Dendritic cell treated with granulocyte-macrophage colony-stimulating factor and Interleukin-4, amounts not matched to agents 40 ng/mL and 50 ng/mL, for 4 days (primary cell): ENCODE measurements at regions of chr3 and their contacts with region 1.

Region 1: GRCh38 chr3:40476478-40477470 is at the start of gene ZNF619:
- H3K4me3 Mint-ChIP-seq: peak within 1 kb of the TSS; percentile 95
- H3K27ac Mint-ChIP-seq: peak within 1 kb of the TSS; percentile 99
- H3K4me1 Mint-ChIP-seq: peaks cover 17% of the 10 kb centered on the region
- H3K27me3 Mint-ChIP-seq: no peaks in the 10 kb centered on the region

Region 2: GRCh38 chr3:40505599-40506462 is 29.1 kb after region 1 on chr3 and contains the start of gene ZNF620:
- intact Hi-C with region 1: loop called (anchors 1 kb)
- H3K4me3 Mint-ChIP-seq: peak within 1 kb of the TSS; percentile 84
- H3K27ac Mint-ChIP-seq: peak within 1 kb of the TSS; percentile 75
- H3K4me1 Mint-ChIP-seq: peaks cover 12% of the 10 kb centered on the region
- H3K27me3 Mint-ChIP-seq: peaks cover 11% of the 10 kb centered on the region

Region 3: DNA sequence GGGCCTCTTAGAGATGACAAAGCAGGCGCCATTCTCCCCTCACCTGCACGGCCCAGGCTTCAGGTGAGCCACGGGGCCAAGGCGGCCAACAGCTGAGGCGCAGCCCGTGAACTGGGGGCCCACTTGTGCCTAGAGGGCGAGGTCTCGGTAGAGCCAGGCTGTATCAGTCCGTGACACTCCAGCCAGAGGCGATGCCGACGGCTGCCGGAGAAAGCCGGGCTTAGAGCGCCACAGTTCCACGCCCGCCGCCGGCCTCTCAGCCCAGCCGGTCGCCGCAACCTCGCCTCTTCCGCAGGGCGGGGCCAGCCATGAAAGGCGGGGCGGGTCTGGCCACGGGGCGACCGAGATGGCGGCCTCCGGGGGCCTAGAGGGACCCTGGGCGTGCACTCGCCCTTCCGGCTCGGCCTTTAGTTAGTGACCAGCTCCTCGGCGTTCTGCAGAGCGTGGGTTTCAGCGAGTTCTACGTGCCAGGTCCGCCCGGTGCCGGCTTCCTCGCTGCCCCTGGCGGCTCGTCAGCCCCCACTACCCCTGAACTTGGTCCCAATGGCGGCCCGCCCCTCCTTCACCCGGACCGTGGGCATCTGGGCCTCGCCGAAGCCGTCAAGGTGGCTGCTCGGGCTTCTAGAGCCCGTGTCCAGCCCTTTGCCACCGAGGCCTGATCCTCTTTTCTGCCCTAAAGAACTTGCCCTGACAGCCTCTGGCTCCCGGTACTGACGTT is 48.0 kb after region 1 on chr3 and contains the start of gene ZNF621:
- intact Hi-C with region 1: loop called (anchors 1 kb)
- H3K4me3 Mint-ChIP-seq: peak within 1 kb of the TSS; percentile 88
- H3K27ac Mint-ChIP-seq: peak within 1 kb of the TSS; percentile 98
- H3K4me1 Mint-ChIP-seq: peaks cover 27% of the 10 kb centered on the region
- H3K27me3 Mint-ChIP-seq: no peaks in the 10 kb centered on the region